ENCODE measurements at regions of chr15 and their contacts with region 1.

Region 1: GRCh38 chr15:43824302-43825246 is at the start of gene MFAP1:
- DNase-seq: peak; percentile 98
- H3K4me3 ChIP-seq: peak within 1 kb of the TSS; percentile 57 to 83 (median 70)
- H3K27ac ChIP-seq: peak within 1 kb of the TSS; percentile 85 to 93 (median 90)
- H3K4me1 ChIP-seq: peaks cover 0 to 52% (median 41%) of the 10 kb centered on the region in 4 donors
- H3K27me3 ChIP-seq: no peaks in the 10 kb centered on the region
- CTCF ChIP-seq: no peak
- EP300 ChIP-seq: peak in 1 of 4 donors; percentile 55
- POLR2A ChIP-seq: peak; percentile 85 to 87
- total RNA-seq, gene MFAP1: 12.7 to 20.0 (median 15.2) TPM

Region 2: GRCh38 chr15:43791993-43792760 is 32.4 kb before region 1 on chr15 and contains the start of gene SERF2:
- intact Hi-C with region 1: loop called (anchors 2 kb)
- DNase-seq: peak; percentile 100
- H3K4me3 ChIP-seq: peak within 1 kb of the TSS; percentile 71 to 91 (median 88)
- H3K27ac ChIP-seq: peak within 1 kb of the TSS; percentile 94 to 99 (median 96)
- H3K4me1 ChIP-seq: peaks cover 4 to 47% (median 28%) of the 10 kb centered on the region in 4 donors
- H3K27me3 ChIP-seq: no peaks in the 10 kb centered on the region
- CTCF ChIP-seq: no peak
- EP300 ChIP-seq: peak in 1 of 4 donors; percentile 68
- POLR2A ChIP-seq: peak; percentile 99
- total RNA-seq, gene SERF2: 625 to 803 (median 718) TPM